Activated naive CD4-positive, alpha-beta T cell treated with anti-CD3 and anti-CD28 coated beads for 36 hours (primary cell): ENCODE measurements at regions of chr3 and their contacts with region 1.

Region 1: GRCh38 chr3:138761002-138761401 is 73.7 kb downstream of the PIK3CB start:
- DNase-seq: no peak
- H3K4me3 Mint-ChIP-seq: no peak overlapping the region
- H3K27ac Mint-ChIP-seq: peak overlapping the region; percentile 68
- H3K4me1 Mint-ChIP-seq: peaks cover 38% of the 10 kb centered on the region
- H3K27me3 Mint-ChIP-seq: no peaks in the 10 kb centered on the region

Region 2: DNA sequence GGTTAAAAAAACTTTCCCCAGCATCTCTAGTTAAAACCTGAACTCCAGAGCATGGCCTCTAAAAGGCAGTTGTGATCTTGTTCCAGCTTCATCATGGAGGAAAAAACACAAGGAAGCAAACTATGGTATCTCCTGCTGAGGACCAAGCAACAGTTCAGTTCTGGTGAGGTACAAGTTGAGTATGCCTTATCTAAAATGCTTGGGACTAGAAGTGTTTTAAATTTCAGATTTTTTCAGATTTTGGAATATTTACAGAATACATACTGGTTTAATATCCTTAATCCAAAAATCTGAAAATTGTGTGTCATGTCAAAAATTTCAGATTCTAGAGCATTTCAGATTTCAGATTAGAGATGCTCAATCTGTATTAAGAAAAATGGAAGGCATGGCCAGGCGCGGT is 595.9 kb before region 1 on chr3:
- CTCF ChIA-PET with region 1: no interaction called
- intact Hi-C with region 1: no loop called
- DNase-seq: no peak
- H3K4me3 Mint-ChIP-seq: no peak overlapping the region
- H3K27ac Mint-ChIP-seq: peak overlapping the region; percentile 11
- H3K4me1 Mint-ChIP-seq: peaks cover 11% of the 10 kb centered on the region
- H3K27me3 Mint-ChIP-seq: no peaks in the 10 kb centered on the region

Region 3: GRCh38 chr3:138197058-138197457 is 563.9 kb before region 1 on chr3:
- CTCF ChIA-PET with region 1: no interaction called
- intact Hi-C with region 1: no loop called
- DNase-seq: peak; percentile 51
- H3K4me3 Mint-ChIP-seq: no peak overlapping the region
- H3K27ac Mint-ChIP-seq: no peak overlapping the region
- H3K4me1 Mint-ChIP-seq: peaks cover 35% of the 10 kb centered on the region
- H3K27me3 Mint-ChIP-seq: no peaks in the 10 kb centered on the region

Region 4: DNA sequence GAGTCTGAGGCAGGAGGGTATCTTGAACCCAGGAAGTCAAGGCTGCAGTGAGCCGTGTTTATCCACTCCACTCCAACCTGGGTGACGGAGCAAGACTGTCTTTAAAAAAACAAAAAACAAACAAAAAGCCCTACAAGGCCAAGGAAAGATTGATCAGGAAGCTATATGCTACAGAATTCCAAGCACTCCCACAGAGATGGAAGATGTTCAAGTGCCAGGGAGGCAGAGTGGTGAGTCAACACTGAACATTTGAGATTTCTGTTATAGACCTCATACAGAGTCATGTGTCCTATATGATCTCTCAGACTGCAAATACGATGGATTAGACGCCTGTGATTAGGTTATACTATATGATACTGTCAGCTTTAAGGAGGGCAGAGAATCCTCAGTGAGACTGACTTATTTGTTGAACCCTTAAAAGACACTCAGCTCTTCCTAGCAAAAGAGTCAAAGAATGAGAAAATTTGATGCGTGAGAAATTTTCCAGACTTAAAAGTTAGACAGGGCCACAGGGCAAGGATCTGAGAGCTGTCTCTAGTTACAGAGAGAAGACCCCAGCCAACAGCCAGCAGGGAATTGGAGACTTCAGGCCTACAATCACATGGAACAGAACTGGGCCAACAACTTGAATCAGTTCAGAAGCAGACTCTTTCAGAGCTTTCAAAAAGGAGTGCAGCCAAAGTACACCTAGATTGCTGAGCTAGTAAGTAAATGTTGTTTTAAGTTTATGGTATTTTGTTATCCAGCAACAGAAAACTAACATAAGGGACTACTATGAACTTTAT is 33.9 kb before region 1 on chr3:
- CTCF ChIA-PET with region 1: no interaction called
- intact Hi-C with region 1: loop called (anchors 5 kb)
- DNase-seq: no peak
- H3K4me3 Mint-ChIP-seq: no peak overlapping the region
- H3K27ac Mint-ChIP-seq: peak overlapping the region; percentile 15
- H3K4me1 Mint-ChIP-seq: peaks cover 34% of the 10 kb centered on the region
- H3K27me3 Mint-ChIP-seq: no peaks in the 10 kb centered on the region

Region 5: DNA sequence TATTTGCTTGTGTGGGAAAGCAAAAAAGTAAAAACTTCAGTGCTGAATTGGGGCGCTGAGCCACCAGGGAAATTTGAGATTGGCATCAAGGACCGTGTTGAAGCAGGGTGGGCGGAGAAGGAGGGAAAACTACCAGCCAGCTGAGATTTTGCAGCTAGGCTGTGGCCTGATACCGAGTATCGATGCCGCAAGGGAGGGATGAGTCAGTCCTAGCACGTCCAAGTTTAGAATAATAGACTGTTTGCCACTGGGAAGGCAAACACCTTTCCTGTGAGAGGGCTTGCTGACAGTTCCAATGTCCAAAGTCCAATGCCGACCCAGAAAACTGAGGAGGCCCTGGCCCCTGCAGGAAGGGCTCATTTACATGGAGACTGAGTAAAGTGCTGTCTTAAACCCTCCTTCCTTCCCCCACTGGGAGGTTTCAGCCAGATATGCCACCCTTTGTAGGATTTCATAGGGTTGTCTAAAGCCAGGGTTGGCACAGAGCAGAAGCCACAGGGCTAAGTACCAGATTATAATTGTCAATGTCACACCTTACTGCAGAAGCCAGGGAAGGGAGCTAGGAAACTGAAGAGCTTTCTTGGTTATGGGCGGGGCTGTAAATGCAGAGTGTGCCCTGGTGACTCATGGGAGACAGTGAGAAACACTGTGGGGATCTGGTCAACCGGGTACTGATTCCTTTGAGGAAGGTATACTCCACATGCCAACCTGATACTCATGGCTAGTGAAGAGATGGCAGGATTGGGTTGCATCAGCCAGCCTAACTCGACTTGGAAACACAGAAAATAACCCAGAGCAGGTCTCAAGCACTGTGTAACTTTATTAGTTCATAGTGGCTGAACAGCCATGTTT is 102.1 kb after region 1 on chr3:
- CTCF ChIA-PET with region 1: no interaction called
- intact Hi-C with region 1: no loop called
- DNase-seq: peak; percentile 22
- H3K4me3 Mint-ChIP-seq: no peak overlapping the region
- H3K27ac Mint-ChIP-seq: no peak overlapping the region
- H3K4me1 Mint-ChIP-seq: peaks cover 5% of the 10 kb centered on the region
- H3K27me3 Mint-ChIP-seq: no peaks in the 10 kb centered on the region